Activated CD8-positive, alpha-beta T cell treated with anti-CD3 and anti-CD28 coated beads, Interleukin-2, amount 10 ng/mL, durations not matched to agents 7 days and 5 days (primary cell): ENCODE measurements at regions of chr1 and their contacts with region 1.

Region 1: DNA sequence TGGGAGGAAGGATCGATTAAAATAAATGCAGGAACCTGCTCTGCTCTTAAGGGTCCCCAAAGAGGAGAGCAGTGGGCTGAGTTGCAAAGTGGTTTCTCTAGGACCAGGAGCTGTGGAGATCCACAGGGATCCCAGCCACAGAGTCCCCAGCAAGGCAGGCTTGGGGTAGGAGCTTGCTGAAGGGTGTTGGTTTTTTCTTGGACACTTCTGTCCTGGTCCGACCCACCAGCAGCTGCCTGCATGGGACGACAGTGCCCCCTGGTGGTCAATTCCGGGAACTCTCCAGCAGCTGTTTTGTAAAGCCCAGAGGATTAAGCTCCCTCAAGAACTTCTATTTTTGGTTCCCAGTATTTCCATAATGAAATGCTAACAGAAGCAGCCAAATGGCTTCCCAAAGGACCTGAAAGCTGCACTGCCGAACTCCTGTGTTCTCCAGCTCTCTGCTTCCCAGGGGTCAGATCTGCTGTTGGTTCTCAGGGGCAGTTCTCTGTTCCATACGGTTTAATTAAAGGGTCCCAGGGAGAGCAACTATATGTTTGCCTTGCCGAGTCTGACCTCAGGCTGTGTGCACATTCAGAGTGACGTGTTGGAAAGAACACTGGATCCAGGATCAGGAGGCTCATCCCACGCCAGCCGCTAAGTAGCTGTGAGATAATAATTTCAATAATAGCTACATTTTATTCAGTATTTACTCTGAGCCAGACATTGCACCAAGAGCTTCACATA is 23.2 kb downstream of the NENF start:
- DNase-seq: peak; percentile 89
- ATAC-seq: peak; percentile 78
- H3K4me3 Mint-ChIP-seq: no peak overlapping the region
- H3K27ac Mint-ChIP-seq: no peak overlapping the region
- H3K4me1 Mint-ChIP-seq: peaks cover 15% of the 10 kb centered on the region
- H3K27me3 Mint-ChIP-seq: no peaks in the 10 kb centered on the region

Region 2: DNA sequence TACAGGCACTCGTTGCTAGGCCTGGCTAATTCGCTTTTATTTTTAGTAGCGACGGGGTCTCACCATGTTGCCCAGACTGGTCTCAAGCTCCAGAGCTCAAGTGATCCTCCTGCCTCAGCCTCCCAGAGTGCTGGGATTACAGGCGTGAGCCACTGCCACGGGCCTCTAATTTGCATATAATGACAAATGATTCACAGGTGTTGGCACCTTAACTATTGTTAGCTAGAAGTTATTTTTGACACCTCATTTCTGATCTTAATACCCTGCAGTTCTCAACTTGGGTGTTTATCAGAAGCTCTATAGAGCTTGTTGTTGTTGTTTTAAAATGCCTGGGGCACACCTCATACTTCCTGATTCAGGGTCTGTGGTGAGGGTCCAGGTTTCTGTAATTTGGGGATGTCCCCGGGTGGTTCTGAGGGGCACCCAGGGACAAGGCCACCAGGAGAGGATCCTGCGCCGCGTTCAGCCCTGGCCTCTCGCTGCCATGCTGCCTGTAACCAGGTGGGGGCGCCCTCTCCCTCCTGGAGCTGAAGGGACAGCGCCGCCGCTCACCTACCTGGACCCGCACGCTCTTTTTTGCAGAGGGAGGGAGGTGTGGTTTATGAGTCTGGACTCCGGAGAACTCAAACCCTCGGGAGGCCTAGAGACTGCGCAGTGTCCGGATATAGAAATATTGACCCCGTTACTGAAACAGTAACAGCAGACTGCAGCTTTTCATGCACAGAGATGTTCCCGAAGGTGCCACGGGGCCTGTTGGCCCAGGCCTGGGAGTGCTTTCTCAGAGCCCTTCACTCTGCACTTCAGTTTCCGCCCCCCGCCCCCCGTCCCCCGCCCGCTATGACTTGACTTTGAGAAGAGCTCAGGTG is 757.6 kb before region 1 on chr1:
- CTCF ChIA-PET with region 1: interaction called, 17 read pairs
- POLR2A ChIA-PET with region 1: no interaction called
- DNase-seq: peak; percentile 90
- ATAC-seq: peak; percentile 95
- H3K4me3 Mint-ChIP-seq: peak overlapping the region; percentile 32
- H3K27ac Mint-ChIP-seq: peak overlapping the region; percentile 31
- H3K4me1 Mint-ChIP-seq: peaks cover 50% of the 10 kb centered on the region
- H3K27me3 Mint-ChIP-seq: peaks cover 3% of the 10 kb centered on the region

Region 3: GRCh38 chr1:212078826-212079225 is 377.1 kb before region 1 on chr1:
- CTCF ChIA-PET with region 1: interaction called, 11 read pairs
- POLR2A ChIA-PET with region 1: no interaction called
- DNase-seq: no peak
- ATAC-seq: no peak
- H3K4me3 Mint-ChIP-seq: no peak overlapping the region
- H3K27ac Mint-ChIP-seq: no peak overlapping the region
- H3K4me1 Mint-ChIP-seq: no peaks in the 10 kb centered on the region
- H3K27me3 Mint-ChIP-seq: no peaks in the 10 kb centered on the region

Region 4: DNA sequence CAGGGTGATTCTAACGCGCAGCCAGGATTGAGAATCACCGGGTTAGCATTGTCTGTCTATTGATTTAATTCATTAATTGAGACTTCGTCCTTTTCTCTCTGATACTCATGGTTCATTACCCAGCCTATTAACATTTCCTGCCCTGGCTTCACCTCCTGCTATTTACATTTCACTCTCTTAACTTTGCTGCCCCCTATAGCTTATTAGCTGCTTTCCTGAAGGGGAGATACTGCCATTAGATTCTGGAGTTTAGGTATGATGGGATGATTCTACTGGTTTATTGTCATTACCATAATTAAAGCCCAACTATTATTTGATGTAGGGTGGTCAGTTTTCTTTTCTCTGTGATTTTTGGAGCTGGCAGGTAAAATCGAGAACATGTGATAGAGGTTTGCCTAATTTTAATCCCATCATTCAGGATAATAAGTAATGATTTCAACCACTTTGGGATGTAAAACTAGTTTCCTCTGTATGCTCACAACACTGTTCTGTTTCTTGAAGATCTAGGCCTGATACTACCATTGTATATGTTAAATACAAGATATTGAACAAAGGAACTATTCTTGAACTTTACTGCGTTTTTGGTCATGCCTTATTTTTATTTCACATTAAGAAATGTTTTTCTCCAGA is 164.3 kb before region 1 on chr1:
- CTCF ChIA-PET with region 1: interaction called, 60 read pairs
- POLR2A ChIA-PET with region 1: no interaction called
- DNase-seq: peak; percentile 37
- ATAC-seq: peak; percentile 77
- H3K4me3 Mint-ChIP-seq: no peak overlapping the region
- H3K27ac Mint-ChIP-seq: no peak overlapping the region
- H3K4me1 Mint-ChIP-seq: peaks cover 69% of the 10 kb centered on the region
- H3K27me3 Mint-ChIP-seq: no peaks in the 10 kb centered on the region

Region 5: GRCh38 chr1:212426311-212426710 is 29.7 kb before region 1 on chr1:
- CTCF ChIA-PET with region 1: interaction called, 43 read pairs
- POLR2A ChIA-PET with region 1: no interaction called
- DNase-seq: no peak
- ATAC-seq: no peak
- H3K4me3 Mint-ChIP-seq: no peak overlapping the region
- H3K27ac Mint-ChIP-seq: no peak overlapping the region
- H3K4me1 Mint-ChIP-seq: peaks cover 4% of the 10 kb centered on the region
- H3K27me3 Mint-ChIP-seq: peaks cover 18% of the 10 kb centered on the region

Region 6: DNA sequence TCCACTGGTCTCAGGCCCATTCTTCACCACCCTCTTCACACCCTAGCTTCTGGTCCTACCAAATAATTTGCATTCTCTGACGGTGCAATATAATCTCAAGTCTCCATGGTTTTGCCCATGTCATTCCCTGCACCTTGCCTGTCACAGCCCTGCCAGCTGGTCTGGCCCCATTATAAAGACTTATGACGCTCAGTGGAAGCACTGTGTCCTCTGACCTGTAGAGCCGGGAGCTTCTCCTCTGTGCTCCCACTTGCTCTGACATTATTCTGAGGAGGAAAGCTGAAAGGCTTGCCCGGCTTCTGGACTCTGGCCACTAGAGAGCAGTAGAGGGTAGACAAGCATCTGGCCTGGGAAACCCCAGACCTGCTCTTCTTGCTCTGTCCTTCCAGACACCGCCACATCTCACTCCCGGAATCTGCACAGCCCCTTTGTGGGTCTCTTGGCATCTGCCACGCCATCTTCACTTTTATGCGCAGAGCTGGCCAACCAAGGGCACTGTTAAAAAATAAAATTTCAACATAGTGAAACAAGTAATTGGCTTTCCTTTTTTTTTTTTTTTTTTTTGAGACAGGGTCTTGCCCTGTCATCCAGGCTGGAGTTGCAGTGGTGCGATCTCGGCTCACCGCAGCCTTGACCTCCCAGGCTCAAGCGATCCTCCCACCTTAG is 21.2 kb after region 1 on chr1:
- CTCF ChIA-PET with region 1: interaction called, 69 read pairs
- POLR2A ChIA-PET with region 1: no interaction called
- DNase-seq: peak; percentile 83
- ATAC-seq: peak; percentile 91
- H3K4me3 Mint-ChIP-seq: no peak overlapping the region
- H3K27ac Mint-ChIP-seq: no peak overlapping the region
- H3K4me1 Mint-ChIP-seq: peaks cover 25% of the 10 kb centered on the region
- H3K27me3 Mint-ChIP-seq: peaks cover 19% of the 10 kb centered on the region